Cardiac septum (tissue), 1 donor: ENCODE measurements at regions of chr5 and their contacts with region 1.

Region 1: GRCh38 chr5:157476702-157477408 is 16.8 kb downstream of the NIPAL4 start:
- DNase-seq: no peak

Region 2: GRCh38 chr5:157431544-157432200 is 45.2 kb before region 1 on chr5:
- intact Hi-C with region 1: loop called (anchors 5 kb)
- DNase-seq: no peak